ENCODE measurements at regions of chr11 and their contacts with region 1.

Region 1: DNA sequence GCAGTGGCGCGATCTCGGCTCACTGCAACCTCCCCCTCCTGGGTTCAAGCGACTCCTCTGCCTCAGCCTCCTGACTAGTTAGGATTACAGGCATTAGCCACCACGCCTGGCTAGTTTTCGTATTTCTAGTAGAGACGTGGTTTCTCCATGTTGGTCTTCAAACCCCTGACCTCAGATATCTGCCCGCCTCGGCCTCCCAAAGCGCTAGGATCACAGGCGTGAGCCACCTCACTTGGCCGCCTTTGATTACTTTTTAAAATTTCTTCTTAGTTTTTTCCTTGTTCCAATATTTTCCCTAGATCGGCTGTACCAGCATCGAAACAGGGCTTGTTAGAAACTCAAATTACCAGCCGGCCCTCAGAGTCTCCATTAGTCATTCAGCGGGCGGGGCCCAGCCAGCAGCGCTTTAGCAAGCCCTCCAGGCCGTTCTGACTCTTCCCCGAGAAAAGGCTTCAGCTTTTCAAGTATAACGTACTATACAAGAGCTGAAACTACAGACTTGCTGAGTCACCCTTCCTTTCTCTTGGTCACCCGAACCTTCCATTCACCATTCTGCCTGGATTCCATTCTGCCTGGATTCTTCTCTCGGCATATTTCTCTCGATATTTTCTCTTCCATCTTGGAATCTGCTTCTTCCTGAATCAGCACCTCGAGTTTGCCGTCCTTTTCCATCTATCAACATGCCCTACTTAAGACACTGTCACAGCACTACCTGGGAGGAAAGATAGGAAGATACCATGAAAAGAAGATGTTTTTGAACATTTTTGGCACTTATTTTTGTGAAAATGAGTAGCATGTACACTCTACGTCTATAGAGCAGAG is 6.7 kb upstream of the CAPRIN1 start:
- DNase-seq: no peak

Region 2: DNA sequence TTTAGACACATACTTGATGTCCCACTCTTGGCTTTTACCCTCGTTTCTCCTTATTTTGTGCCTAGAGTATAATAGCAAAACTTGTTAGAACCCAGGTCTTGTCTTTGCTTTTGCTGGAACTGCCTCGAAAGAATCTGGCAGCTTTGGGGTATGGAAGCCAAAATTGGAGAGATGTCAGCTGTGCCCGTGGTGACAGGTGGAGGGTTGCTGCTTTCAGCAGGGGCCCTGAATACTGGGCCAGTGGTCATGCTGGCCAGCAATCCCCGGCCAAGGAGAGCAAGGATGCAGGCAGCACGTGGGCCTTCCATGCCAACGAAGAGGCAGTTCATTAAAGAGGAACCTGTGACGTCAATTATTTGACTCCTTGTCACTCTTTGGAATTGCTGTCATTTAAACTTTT is 606.6 kb before region 1 on chr11:
- intact Hi-C with region 1: no loop called
- DNase-seq: peak in 3 of 42 donors; percentile 9 to 16 (median 9)

Region 3: DNA sequence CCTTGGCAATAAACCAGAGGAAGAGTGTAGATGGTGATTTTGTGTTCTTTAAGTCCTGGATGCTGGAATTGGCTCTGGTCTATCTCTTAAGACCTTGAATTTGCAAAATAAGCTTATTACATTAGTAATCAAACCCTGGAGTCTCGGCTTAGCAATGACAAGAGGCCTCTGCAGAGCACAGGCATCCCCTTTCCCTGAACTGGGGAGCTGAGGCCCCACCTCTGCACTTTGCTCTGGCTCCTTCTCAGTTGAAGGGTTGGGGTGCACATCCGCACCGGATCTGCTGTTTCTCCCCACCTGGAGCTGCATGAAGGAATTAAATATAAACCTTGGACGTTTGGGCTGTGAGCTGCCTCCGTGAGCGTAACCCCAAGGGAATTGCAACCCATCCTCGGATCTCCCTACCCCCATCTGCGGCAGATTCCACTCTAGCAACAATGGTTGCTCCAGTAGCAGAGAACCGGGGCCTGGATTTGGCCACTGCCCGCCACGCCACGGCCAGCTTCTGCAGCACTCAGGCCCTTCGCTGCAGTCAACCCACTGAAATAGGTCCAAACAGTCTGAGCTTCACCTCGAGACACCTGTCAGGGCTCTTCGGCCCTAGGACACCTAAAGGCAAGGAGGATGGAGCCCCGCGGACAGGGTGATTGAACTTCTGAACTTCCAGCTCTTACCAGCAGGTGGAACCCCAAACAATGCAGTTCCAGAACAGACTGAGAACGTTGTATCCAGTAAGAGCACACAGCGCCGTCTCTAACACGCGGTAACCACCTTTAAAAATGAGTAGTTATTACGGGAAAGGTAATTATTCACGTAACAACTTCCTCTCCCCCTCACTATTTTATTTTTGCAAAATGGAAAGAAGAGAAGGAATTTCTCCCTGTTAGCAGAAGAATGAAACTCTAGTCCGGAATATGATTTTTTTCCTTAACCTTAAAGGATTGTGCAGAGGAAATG is 48.1 kb before region 1 on chr11:
- intact Hi-C with region 1: loop called (anchors 10 kb)
- DNase-seq: peak; percentile 27 to 92 (median 78)

Measured in head of caudate nucleus (tissue), 42 donors.